AG04450 (cell line): ENCODE measurements at regions of chr20 and their contacts with region 1.

Region 1: DNA sequence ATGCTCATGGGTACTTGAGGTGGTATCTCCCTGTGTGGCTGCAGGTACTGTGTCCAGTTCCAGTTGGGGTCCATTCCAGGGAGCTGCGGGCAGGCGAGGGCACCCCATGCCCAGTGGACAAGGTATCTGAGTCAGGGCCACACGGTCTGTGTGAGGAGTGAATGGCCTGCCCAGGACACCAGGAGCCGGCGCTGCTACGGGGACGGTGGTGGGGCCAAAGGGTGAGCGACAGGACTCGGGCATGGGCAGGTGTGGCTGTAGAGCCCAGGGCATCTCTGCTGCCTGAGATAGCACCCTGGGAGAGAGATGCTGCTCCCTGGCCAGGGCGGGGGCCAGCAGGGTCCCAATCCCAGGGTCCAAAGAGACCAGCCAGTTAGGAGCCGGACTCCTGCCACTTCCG is 57.6 kb upstream of the ZNFX1 start:
- DNase-seq: no peak
- H3K4me3 ChIP-seq: no peak overlapping the region
- H3K27ac ChIP-seq: no peak overlapping the region
- H3K27me3 ChIP-seq: peaks cover 21% of the 10 kb centered on the region
- CTCF ChIP-seq: no peak

Region 2: DNA sequence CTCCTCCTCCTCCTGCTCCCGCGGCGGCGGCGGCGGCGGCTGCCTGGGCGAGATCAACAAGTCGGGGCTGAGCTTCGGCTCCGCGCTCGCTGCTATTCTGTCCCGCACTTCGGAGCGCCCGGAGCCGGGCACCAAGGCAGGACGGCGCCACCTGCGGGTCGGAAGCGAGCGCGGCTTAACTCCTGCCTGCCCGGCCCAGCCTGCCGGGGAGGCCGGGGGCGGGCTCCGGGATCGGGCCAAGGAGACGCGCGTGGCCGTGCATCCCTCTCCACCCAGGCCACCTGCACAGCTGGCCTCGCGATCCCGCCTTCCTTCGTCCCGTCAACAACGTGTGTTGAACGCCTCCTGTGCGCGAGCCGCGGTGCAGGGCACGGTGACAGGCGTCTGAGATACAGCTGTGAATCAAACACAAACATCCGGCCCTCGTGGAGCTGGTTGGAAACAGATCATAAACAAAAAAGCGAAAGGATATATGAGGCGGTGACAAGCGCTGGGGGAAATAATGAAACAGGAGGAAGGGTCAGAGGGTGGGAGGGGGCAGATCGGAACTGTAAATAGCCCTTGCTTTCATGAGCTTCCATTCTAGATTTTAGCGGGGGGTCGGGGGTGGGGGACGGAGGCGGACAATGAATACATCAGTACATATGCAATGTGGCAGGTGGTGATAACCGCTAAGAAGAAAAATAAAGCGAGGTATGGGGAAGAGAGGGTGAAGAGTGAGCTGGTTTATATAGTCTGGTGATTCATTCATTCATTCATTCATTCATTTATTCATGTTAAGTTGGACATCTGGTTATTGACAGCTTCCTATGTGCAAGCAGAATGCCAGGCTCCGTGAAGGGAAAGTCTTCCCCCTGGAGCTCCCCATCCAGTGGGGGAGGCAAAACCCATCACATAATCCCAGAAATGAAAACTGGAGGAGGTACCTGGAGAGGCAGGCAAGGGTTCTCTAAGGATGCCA is 149.0 kb after region 1 on chr20:
- CTCF ChIA-PET with region 1: interaction called, 35 read pairs
- POLR2A ChIA-PET with region 1: no interaction called
- DNase-seq: peak; percentile 32
- H3K4me3 ChIP-seq: peak overlapping the region; percentile 58
- H3K27ac ChIP-seq: no peak overlapping the region
- H3K27me3 ChIP-seq: peaks cover 53% of the 10 kb centered on the region
- CTCF ChIP-seq: peak; percentile 69

Region 3: GRCh38 chr20:49505518-49505917 is 170.0 kb after region 1 on chr20:
- CTCF ChIA-PET with region 1: interaction called, 24 read pairs
- POLR2A ChIA-PET with region 1: no interaction called
- DNase-seq: no peak
- H3K4me3 ChIP-seq: no peak overlapping the region
- H3K27ac ChIP-seq: no peak overlapping the region
- H3K27me3 ChIP-seq: peaks cover 19% of the 10 kb centered on the region
- CTCF ChIP-seq: no peak

Region 4: DNA sequence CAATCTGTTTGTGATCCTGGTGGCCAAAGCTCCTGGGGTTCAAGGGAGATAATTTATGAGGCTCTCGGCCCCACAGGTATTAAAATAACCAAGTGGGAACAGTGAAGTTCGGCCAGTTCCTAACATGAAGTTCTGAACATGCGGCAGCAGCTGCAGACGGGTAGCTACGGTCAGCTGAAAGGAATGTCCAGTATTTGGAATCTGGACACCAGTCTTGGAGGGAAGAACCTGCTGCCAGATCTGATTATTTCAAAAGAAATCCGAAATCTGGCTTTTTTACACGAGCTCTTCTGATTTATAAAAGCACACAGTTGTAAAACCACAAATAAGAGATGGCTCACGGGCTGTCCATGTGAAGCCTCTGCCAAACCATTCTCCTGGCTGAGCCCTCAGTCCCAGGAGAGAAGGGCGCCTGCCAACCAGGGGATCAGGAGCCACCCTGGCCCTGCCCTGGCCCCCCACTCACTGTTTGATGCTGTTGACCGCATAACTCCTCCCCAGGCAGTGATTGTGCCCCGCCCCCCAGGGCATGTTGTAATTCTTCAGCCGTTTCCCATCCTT is 175.2 kb after region 1 on chr20:
- CTCF ChIA-PET with region 1: interaction called, 24 read pairs
- POLR2A ChIA-PET with region 1: no interaction called
- DNase-seq: peak; percentile 80
- H3K4me3 ChIP-seq: no peak overlapping the region
- H3K27ac ChIP-seq: peak overlapping the region; percentile 68
- H3K27me3 ChIP-seq: peaks cover 32% of the 10 kb centered on the region
- CTCF ChIP-seq: no peak

Region 5: GRCh38 chr20:49534255-49534712 is 198.8 kb after region 1 on chr20:
- CTCF ChIA-PET with region 1: interaction called, 59 read pairs
- POLR2A ChIA-PET with region 1: interaction called, 3 read pairs
- DNase-seq: peak; percentile 15
- H3K4me3 ChIP-seq: no peak overlapping the region
- H3K27ac ChIP-seq: no peak overlapping the region
- H3K27me3 ChIP-seq: peaks cover 2% of the 10 kb centered on the region
- CTCF ChIP-seq: peak; percentile 86

Region 6: GRCh38 chr20:49865559-49865958 is 530.1 kb after region 1 on chr20:
- CTCF ChIA-PET with region 1: no interaction called
- POLR2A ChIA-PET with region 1: no interaction called
- DNase-seq: no peak
- H3K4me3 ChIP-seq: no peak overlapping the region
- H3K27ac ChIP-seq: peak overlapping the region; percentile 71
- H3K27me3 ChIP-seq: no peaks in the 10 kb centered on the region
- CTCF ChIP-seq: no peak